ENCODE measurements at regions of chr5 and their contacts with region 1.

Region 1: DNA sequence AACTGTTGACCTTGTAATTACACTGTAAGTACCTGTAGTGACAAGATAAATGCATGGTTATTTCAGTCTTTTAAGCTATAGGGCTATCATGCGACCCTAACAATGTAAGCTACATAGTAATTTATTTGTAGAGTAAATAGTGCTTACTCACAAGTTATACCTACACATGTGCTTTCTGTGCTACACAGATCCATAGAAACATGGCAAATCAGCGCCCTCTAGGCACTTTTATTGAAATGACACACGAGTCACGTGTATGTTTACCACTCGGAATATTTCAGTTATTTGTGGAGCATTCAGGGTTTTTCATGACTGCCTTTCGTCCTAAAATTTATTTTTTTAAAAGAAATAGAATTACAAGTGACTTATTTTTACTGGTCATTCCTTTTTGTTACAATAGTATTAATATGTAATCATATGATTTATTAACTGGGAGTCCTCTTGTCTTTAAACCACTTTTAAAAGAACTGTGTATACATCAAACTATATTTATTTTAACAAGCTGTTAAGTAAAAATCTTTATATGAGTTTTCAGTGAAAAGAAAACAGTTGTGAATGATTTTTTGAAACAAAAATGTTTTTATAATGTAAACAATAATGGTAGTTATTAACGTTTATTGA is 1242.3 kb upstream of the WWC1 start:
- DNase-seq: peak; percentile 54 to 62
- H3K4me3 ChIP-seq: no peak overlapping the region
- H3K4me3 Mint-ChIP-seq: no peak overlapping the region
- H3K27ac Mint-ChIP-seq: no peak overlapping the region
- H3K4me1 ChIP-seq: no peaks in the 10 kb centered on the region
- H3K4me1 Mint-ChIP-seq: no peaks in the 10 kb centered on the region
- H3K27me3 ChIP-seq: no peaks in the 10 kb centered on the region
- H3K27me3 Mint-ChIP-seq: no peaks in the 10 kb centered on the region
- CTCF ChIP-seq: peak; percentile 52 to 72

Region 2: GRCh38 chr5:165630261-165630778 is 1418.8 kb before region 1 on chr5:
- CTCF ChIA-PET with region 1: no interaction called
- POLR2A ChIA-PET with region 1: no interaction called
- intact Hi-C with region 1: loop called (anchors 1 kb)
- DNase-seq: peak; percentile 44 to 63
- H3K4me3 ChIP-seq: no peak overlapping the region
- H3K4me3 Mint-ChIP-seq: no peak overlapping the region
- H3K27ac Mint-ChIP-seq: no peak overlapping the region
- H3K4me1 ChIP-seq: no peaks in the 10 kb centered on the region
- H3K4me1 Mint-ChIP-seq: no peaks in the 10 kb centered on the region
- H3K27me3 ChIP-seq: no peaks in the 10 kb centered on the region
- H3K27me3 Mint-ChIP-seq: no peaks in the 10 kb centered on the region
- CTCF ChIP-seq: peak; percentile 77 to 79

Region 3: GRCh38 chr5:166823360-166823759 is 225.8 kb before region 1 on chr5:
- CTCF ChIA-PET with region 1: no interaction called
- POLR2A ChIA-PET with region 1: no interaction called
- intact Hi-C with region 1: loop called (anchors 1 kb)
- DNase-seq: peak in 1 of 2 experiments; percentile 12
- H3K4me3 ChIP-seq: no peak overlapping the region
- H3K4me3 Mint-ChIP-seq: no peak overlapping the region
- H3K27ac Mint-ChIP-seq: peak overlapping the region; percentile 35
- H3K4me1 ChIP-seq: peaks cover 5% of the 10 kb centered on the region; the same call in 1 of the 2 replicates
- H3K4me1 Mint-ChIP-seq: no peaks in the 10 kb centered on the region
- H3K27me3 ChIP-seq: no peaks in the 10 kb centered on the region
- H3K27me3 Mint-ChIP-seq: no peaks in the 10 kb centered on the region
- CTCF ChIP-seq: no peak

Region 4: GRCh38 chr5:166909040-166909439 is 140.1 kb before region 1 on chr5:
- CTCF ChIA-PET with region 1: no interaction called
- POLR2A ChIA-PET with region 1: no interaction called
- intact Hi-C with region 1: loop called (anchors 5 kb)
- DNase-seq: no peak
- H3K4me3 ChIP-seq: no peak overlapping the region
- H3K4me3 Mint-ChIP-seq: no peak overlapping the region
- H3K27ac Mint-ChIP-seq: no peak overlapping the region
- H3K4me1 ChIP-seq: no peaks in the 10 kb centered on the region
- H3K4me1 Mint-ChIP-seq: no peaks in the 10 kb centered on the region
- H3K27me3 ChIP-seq: no peaks in the 10 kb centered on the region
- H3K27me3 Mint-ChIP-seq: no peaks in the 10 kb centered on the region
- CTCF ChIP-seq: no peak

Region 5: GRCh38 chr5:167030500-167031120 is 18.5 kb before region 1 on chr5:
- CTCF ChIA-PET with region 1: no interaction called
- POLR2A ChIA-PET with region 1: no interaction called
- intact Hi-C with region 1: no loop called
- DNase-seq: peak; percentile 33 to 38
- H3K4me3 ChIP-seq: no peak overlapping the region
- H3K4me3 Mint-ChIP-seq: no peak overlapping the region
- H3K27ac Mint-ChIP-seq: no peak overlapping the region
- H3K4me1 ChIP-seq: no peaks in the 10 kb centered on the region
- H3K4me1 Mint-ChIP-seq: no peaks in the 10 kb centered on the region
- H3K27me3 ChIP-seq: no peaks in the 10 kb centered on the region
- H3K27me3 Mint-ChIP-seq: no peaks in the 10 kb centered on the region
- CTCF ChIP-seq: peak; percentile 5 to 46